Ovary (tissue), 10 donors: ENCODE measurements at regions of chrX and their contacts with region 1.

Region 1: DNA sequence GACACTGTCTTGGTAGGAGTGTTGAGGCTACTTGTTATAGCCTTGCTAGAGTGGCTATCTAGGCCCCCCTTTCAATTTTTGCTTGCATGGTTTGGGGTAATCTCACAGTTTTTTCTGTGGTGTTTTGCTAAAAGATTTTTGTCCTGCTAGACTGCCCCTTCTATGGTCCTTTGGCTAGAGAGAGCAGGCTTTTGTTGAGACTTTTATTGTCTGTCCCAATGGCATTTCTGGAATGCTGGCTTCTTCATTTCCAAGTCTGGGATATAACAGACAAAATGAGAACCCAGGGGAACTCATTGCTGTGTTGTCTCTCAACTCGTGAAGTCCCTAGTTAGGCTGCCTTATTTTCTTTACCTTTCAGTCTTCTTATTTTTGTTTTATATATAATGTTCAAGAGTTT is 160.2 kb upstream of the ZC4H2 start:
- DNase-seq: no peak
- H3K4me3 ChIP-seq: no peak overlapping the region
- H3K27ac ChIP-seq: no peak overlapping the region
- H3K4me1 ChIP-seq: no peaks in the 10 kb centered on the region
- H3K27me3 ChIP-seq: no peaks in the 10 kb centered on the region
- CTCF ChIP-seq: no peak
- EP300 ChIP-seq: no peak
- POLR2A ChIP-seq: no peak

Region 2: GRCh38 chrX:65073233-65073632 is 63.2 kb before region 1 on chrX:
- intact Hi-C with region 1: no loop called
- DNase-seq: no peak
- H3K4me3 ChIP-seq: no peak overlapping the region
- H3K27ac ChIP-seq: no peak overlapping the region
- H3K4me1 ChIP-seq: no peaks in the 10 kb centered on the region
- H3K27me3 ChIP-seq: no peaks in the 10 kb centered on the region
- CTCF ChIP-seq: no peak
- EP300 ChIP-seq: no peak
- POLR2A ChIP-seq: no peak

Region 3: GRCh38 chrX:65093658-65094057 is 42.8 kb before region 1 on chrX:
- intact Hi-C with region 1: loop called in 1 of 4 experiments (anchors 5 kb)
- DNase-seq: no peak
- H3K4me3 ChIP-seq: no peak overlapping the region
- H3K27ac ChIP-seq: no peak overlapping the region
- H3K4me1 ChIP-seq: no peaks in the 10 kb centered on the region
- H3K27me3 ChIP-seq: no peaks in the 10 kb centered on the region
- CTCF ChIP-seq: no peak
- EP300 ChIP-seq: no peak
- POLR2A ChIP-seq: no peak